Heart right ventricle (tissue), 16 donors: ENCODE measurements at regions of chr2 and their contacts with region 1.

Region 1: GRCh38 chr2:64311948-64312621 is 141.9 kb upstream of the LGALSL start:
- DNase-seq: peak; percentile 61 to 81
- ATAC-seq: peak; percentile 88 to 95 (median 93)
- H3K4me3 ChIP-seq: peak overlapping the region in 3 of 10 donors; percentile 3 to 22 (median 8)
- H3K27ac ChIP-seq: peak overlapping the region in 7 of 10 donors; percentile 7 to 71 (median 53)
- H3K4me1 ChIP-seq: peaks cover 0 to 27% (median 18%) of the 10 kb centered on the region in 9 donors
- H3K27me3 ChIP-seq: no peaks in the 10 kb centered on the region
- CTCF ChIP-seq: peak; percentile 18 to 77 (median 58)

Region 2: GRCh38 chr2:64354857-64355680 is 43.0 kb after region 1 on chr2:
- intact Hi-C with region 1: no loop called
- DNase-seq: no peak
- ATAC-seq: no peak
- H3K4me3 ChIP-seq: no peak overlapping the region
- H3K27ac ChIP-seq: no peak overlapping the region
- H3K4me1 ChIP-seq: peaks cover 0 to 15% (median 3%) of the 10 kb centered on the region in 9 donors
- H3K27me3 ChIP-seq: peaks cover 0 to 38% (median 4%) of the 10 kb centered on the region in 7 donors
- CTCF ChIP-seq: no peak

Region 3: DNA sequence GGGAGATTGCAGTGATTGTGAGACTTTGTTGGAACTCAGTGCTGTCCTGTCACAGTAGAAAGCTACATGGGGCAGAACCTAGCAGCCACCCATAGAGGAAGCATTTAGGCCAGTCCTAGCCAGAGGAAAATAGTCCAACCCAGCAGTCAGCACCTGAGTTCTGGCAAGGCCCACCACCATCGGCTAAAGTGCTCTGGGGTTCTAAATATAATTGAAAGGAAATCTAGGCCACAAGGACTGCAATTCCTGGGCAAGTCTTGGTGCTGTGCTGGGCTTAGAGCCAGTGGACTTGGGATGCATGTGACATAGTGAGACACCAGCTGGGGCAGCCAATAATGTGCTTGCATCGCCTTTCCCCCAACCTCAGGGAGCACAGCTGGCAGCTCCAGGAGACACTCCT is 886.7 kb after region 1 on chr2:
- intact Hi-C with region 1: loop called in 1 of 10 experiments (anchors 10 kb)
- DNase-seq: peak in 1 of 2 donors; percentile 15
- ATAC-seq: peak in 6 of 8 donors; percentile 28 to 77 (median 66)
- H3K4me3 ChIP-seq: no peak overlapping the region
- H3K27ac ChIP-seq: no peak overlapping the region
- H3K4me1 ChIP-seq: peaks cover 0 to 7% (median 0%) of the 10 kb centered on the region in 9 donors
- H3K27me3 ChIP-seq: no peaks in the 10 kb centered on the region
- CTCF ChIP-seq: no peak